Head of caudate nucleus (tissue), 42 donors: ENCODE measurements at regions of chr16 and their contacts with region 1.

Region 1: GRCh38 chr16:234468-235305 is at the start of gene FAM234A:
- DNase-seq: peak; percentile 77 to 97 (median 94)

Region 2: DNA sequence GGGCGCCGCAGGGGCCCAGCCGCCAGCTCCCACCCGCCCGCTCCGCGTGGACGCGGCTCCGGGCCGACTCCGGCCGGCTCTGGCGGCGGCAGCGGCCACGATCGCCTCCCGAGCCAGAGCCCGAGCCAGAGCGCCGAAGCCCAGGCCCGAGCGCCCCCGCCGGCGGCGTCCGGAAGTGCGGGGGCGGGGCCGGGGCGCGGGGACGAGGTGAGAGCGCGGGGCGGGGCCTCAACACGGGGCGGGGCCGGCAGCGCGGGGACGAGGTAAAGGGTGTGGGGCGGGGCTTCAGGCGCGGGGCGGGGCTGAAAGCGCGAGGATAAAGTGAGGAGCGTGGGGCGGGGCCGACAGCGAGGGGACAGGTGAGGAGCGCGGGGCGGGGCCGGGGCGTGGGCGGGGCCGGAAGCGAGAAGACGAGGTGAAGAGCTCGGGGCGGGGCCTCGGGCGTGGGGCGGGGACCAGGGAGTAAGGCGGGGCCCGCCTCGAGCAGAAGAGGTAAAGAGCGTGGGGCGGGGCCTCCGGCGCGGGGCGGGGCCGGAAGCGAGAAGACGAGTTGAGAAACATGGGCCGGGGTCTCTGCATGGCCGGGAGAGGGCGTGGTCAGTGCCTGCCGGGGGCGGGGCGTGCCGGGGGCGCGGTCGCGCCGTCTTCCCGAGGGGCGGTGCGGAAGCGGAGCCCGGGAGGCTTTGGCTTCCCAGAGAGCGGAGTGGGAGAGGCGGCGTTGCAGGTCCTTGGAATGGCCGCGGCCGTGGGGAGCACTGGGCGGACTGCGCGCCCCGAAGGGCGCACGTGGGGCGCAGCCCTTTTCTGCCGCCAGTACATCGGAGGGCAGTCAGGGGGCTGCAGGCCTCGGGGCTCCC is 118.1 kb after region 1 on chr16 and contains the start of gene AXIN1:
- intact Hi-C with region 1: loop called (anchors 10 kb)
- DNase-seq: peak; percentile 91 to 99 (median 97)